GM10248 (cell line): ENCODE measurements at regions of chr3 and their contacts with region 1.

Region 1: DNA sequence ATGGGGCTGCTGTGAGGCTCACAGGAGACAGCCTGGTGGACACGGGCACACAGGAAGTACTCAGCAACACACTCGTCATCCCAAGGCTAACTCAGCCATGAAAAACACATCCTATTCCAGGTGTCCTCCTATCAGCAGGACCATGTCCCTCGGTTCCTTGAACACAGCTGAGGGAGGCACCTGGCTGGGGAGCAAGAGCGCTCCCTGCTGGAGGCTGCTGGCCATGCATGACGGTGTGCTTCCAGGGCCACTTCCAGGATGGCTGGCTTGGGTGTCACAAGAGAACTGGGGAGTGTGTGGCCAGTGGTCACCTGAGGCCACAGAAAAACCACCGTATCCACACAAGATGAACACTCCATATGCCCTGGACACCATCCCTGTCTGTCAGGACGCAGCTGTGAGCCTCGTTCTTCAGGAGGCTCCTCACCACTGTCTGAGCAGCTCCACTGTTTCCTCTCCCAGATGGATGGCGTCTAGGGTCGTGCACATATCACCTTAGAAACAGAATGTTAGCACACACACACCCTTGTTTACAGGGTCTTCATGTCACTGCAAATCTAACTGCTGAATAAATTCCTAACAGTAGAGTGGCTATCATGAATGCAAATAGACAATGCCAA is 31.0 kb downstream of the POC1A start:
- DNase-seq: peak; percentile 88
- CTCF ChIP-seq: peak; percentile 98

Region 2: GRCh38 chr3:52001443-52001974 is 121.7 kb before region 1 on chr3:
- CTCF ChIA-PET with region 1: interaction called, 104 read pairs
- POLR2A ChIA-PET with region 1: no interaction called
- DNase-seq: peak; percentile 94
- CTCF ChIP-seq: peak; percentile 99

Region 3: GRCh38 chr3:52041118-52041731 is 82.0 kb before region 1 on chr3:
- CTCF ChIA-PET with region 1: interaction called, 13 read pairs
- POLR2A ChIA-PET with region 1: no interaction called
- DNase-seq: no peak
- CTCF ChIP-seq: no peak

Region 4: DNA sequence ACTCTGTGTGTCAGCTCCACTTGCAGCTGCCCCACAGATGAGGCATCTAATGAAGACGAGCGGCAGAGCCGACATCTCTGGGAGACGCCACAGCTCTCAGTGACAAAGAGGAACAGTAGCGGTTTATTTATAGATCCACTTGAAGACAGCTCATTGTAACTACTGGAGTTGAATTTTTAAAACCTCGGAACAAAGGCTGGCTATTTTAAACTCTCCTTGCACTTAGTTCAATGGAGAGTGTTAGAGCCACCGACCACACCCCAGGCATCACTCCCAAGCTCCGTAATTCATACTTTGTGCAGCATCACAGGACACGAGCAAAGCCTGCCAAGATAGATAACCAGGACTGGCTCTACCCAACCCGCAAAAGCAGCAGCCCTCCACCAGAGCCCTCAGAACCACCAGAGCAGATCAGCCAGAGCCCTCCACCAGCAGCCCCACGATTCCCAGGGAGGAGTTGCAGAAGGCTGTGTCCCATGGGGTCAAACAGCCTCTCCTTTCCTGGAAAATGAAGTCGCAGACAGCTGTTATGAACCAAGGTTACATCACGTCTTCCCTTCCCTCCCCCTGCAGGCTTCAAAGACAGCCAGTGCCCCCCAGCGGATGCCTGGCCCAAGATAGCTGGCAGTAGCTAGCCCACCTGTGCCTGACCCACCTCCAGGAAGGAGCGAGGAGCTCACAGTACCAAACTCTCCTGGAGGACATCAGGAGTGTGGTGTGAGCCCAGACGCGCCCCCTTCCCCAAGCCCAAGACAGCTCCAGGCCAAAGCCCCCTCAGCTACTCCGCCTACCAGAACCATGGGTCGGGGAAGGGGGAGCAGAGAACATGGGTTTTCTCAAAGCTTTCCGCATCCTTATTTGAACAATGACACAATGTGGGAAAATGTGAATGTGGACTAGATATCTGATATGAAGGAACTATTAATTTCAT is 14.6 kb before region 1 on chr3:
- CTCF ChIA-PET with region 1: interaction called, 28 read pairs
- POLR2A ChIA-PET with region 1: no interaction called
- DNase-seq: no peak
- CTCF ChIP-seq: no peak

Region 5: DNA sequence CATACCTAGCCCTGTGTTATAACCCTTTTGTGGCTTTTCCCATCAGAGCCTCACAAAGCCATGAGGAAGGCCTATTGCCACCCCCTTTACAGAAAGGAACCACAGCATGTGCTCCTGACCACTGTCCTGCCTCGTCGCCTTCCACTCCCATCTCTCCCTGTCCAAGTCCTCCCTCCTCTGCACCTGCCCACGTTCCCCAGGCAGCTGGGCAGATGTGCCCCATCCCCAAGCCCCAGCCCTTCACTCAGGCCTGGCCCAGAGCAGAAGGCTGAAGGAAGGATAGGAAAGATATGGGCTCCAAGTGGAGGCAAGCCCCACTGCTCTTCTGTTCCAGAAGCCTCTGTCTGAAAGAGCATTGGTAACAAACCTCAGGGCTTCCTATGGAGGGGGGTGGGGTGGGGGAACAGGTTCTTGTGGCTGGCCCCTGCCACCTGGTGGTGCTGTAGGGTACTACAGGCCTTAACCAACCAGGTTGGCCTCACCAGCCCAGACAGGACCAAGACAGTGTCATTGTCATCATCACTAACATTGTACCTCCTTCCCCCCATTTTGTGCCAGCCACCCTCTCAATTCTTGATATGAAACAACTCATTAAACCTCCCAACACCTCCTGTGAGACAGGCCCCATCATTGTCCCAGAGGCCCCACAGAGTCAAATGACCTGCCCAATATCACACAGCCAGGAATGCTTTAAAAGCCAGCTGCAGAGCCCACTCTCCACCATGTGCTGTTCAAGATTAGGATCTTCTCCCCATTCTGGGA is 21.0 kb after region 1 on chr3:
- CTCF ChIA-PET with region 1: interaction called, 14 read pairs
- POLR2A ChIA-PET with region 1: no interaction called
- DNase-seq: peak; percentile 88
- CTCF ChIP-seq: peak; percentile 95